Activated naive CD4-positive, alpha-beta T cell treated with anti-CD3 and anti-CD28 coated beads for 36 hours (primary cell): ENCODE measurements at regions of chr19 and their contacts with region 1.

Region 1: GRCh38 chr19:3324321-3324856 is 42.0 kb upstream of the NFIC start:
- DNase-seq: peak; percentile 90
- H3K4me3 Mint-ChIP-seq: no peak overlapping the region
- H3K27ac Mint-ChIP-seq: no peak overlapping the region
- H3K4me1 Mint-ChIP-seq: peaks cover 2% of the 10 kb centered on the region
- H3K27me3 Mint-ChIP-seq: peaks cover 13% of the 10 kb centered on the region

Region 2: GRCh38 chr19:3429581-3430080 is 105.2 kb after region 1 on chr19:
- CTCF ChIA-PET with region 1: interaction called, 18 read pairs
- intact Hi-C with region 1: loop called (anchors 1 kb)
- DNase-seq: peak; percentile 85
- H3K4me3 Mint-ChIP-seq: no peak overlapping the region
- H3K27ac Mint-ChIP-seq: no peak overlapping the region
- H3K4me1 Mint-ChIP-seq: peaks cover 6% of the 10 kb centered on the region
- H3K27me3 Mint-ChIP-seq: no peaks in the 10 kb centered on the region

Region 3: DNA sequence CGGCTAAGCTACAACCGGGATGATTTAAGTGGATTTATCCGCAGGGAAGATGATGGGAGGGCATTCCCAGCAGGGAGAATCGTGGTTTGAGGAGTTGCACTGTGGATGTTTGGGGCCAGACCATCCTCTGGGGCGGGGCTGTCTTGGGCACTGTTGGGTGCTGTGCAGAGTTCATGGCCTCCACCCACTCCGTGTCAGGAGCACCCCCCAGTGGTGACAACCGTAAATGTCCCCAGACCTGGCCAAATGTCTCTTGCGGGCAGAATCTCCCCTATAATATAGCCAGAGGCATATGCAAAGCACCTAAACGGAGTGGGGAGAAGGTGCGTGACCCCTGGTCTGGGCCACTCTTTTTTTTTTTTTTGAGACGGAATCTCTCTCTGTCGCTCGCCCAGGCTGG is 115.7 kb after region 1 on chr19:
- CTCF ChIA-PET with region 1: interaction called, 10 read pairs
- intact Hi-C with region 1: loop called (anchors 1 kb)
- DNase-seq: peak; percentile 67
- H3K4me3 Mint-ChIP-seq: no peak overlapping the region
- H3K27ac Mint-ChIP-seq: no peak overlapping the region
- H3K4me1 Mint-ChIP-seq: peaks cover 8% of the 10 kb centered on the region
- H3K27me3 Mint-ChIP-seq: no peaks in the 10 kb centered on the region

Region 4: DNA sequence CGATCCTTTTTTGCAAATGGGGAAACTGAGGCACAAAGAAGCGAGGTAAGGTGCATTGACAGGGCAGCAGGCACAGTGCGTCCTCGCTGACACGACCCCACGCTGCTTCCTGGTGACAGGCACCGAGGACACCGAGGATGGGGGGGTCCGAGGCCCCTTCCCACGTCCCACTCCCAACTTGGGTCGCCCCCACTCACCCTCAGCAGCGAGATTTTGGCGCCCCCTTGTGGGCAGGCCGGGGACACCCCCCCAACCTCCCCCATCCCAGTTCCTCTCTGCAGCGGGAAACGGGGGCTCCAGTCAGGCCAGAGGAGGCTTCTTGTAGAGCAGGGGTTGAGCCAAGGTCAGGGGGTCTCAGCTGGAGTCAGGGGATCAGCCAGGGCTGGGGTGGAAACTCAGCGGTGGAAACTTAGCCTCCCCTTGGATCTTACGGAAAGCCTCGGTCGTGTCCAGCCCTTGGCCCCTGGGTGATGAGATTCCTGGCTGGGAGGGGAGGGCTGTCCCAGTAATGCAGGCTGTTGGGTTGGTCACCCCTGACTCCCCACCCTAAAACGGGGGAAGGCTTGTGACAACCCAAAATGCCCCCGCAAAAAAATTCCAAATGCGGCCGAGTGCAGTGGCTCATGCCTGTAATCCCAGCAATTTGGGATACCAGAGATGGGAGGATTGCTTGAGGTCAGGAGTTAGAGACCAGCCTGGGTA is 147.7 kb after region 1 on chr19:
- CTCF ChIA-PET with region 1: interaction called, 7 read pairs
- intact Hi-C with region 1: loop called (anchors 1 kb)
- DNase-seq: peak; percentile 40
- H3K4me3 Mint-ChIP-seq: no peak overlapping the region
- H3K27ac Mint-ChIP-seq: no peak overlapping the region
- H3K4me1 Mint-ChIP-seq: no peaks in the 10 kb centered on the region
- H3K27me3 Mint-ChIP-seq: no peaks in the 10 kb centered on the region

Region 5: GRCh38 chr19:3479834-3480215 is 155.4 kb after region 1 on chr19:
- CTCF ChIA-PET with region 1: interaction called, 9 read pairs
- intact Hi-C with region 1: loop called (anchors 1 kb)
- DNase-seq: peak; percentile 41
- H3K4me3 Mint-ChIP-seq: no peak overlapping the region
- H3K27ac Mint-ChIP-seq: no peak overlapping the region
- H3K4me1 Mint-ChIP-seq: peaks cover 9% of the 10 kb centered on the region
- H3K27me3 Mint-ChIP-seq: no peaks in the 10 kb centered on the region